Brain microvascular endothelial cell (primary cell): ENCODE measurements at regions of chr3 and their contacts with region 1.

Region 1: DNA sequence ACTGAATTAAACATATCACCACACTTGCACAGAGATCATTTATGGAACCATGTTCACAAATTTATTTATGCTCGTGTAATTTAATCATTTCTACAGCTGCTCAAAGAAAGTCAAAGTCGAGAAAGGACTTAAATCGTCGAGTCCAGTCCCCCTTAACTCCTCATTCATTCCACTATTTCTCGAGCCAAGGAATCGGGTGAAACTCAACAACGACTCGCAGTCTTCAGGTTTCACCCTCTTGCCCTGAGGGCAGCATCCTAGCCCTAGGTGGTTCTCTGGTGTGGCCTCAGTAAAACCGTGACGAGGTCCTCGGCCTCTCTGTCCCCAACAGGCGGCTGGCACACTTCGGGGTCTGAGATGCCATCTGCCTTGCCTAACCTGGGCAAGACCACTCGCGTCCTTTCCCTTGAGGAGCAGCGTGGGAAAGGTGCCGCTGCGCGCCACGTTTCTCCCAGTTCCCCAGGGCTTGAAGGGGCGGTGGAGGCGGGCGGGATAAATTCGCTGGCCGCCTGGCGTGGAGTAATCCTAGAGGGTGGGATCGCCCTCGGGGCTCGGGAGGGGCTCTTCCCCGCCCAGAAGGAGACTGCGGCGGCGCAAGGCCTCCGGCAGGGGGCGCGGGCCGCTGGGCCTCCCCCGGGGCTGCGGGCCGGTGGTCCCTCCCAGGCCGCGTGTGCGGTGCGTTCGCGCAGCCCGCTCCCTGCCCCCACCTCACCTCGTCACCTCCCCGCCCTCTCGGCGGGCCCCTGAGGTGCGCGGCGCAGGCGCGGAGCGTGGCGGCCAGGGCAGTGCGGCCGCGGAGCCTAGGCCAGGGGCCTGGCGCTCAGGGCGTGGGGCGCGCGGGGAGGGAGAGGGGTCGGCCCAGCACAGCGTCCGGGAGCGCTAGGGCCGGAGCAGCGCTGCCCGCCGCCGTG is at the start of gene ZNF639:
- DNase-seq: peak; percentile 60
- H3K4me3 ChIP-seq: peak within 1 kb of the TSS; percentile 87
- H3K27ac ChIP-seq: peak within 1 kb of the TSS; percentile 83
- H3K27me3 ChIP-seq: no peaks in the 10 kb centered on the region
- CTCF ChIP-seq: peak; percentile 67

Region 2: DNA sequence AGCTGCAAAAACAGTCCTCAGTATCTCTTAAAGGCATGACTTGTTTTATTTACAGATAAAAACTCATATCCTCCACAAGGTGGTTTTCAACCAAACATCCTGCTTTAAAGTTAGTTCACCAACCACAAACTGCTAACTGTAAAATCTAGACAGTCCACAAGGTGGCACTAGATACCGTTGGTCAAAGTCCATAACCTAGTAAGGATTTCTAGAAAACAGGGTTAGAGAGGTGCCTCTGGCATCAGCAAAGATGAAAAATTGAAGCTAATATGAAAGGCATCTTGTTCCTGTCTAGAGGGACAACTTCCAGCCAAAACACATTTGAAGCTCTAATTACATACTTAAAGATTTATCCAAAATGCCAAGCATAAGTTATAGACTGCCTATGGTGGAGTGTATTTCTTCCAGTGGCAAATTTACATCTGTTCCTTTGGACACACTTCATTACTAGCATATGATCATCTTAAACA is 307.0 kb before region 1 on chr3:
- in situ Hi-C with region 1: loop called (anchors 25 kb)
- DNase-seq: peak; percentile 86
- H3K4me3 ChIP-seq: no peak overlapping the region
- H3K27ac ChIP-seq: no peak overlapping the region
- H3K27me3 ChIP-seq: no peaks in the 10 kb centered on the region
- CTCF ChIP-seq: peak; percentile 69